IMR-90 (cell line): ENCODE measurements at regions of chr4 and their contacts with region 1.

Region 1: DNA sequence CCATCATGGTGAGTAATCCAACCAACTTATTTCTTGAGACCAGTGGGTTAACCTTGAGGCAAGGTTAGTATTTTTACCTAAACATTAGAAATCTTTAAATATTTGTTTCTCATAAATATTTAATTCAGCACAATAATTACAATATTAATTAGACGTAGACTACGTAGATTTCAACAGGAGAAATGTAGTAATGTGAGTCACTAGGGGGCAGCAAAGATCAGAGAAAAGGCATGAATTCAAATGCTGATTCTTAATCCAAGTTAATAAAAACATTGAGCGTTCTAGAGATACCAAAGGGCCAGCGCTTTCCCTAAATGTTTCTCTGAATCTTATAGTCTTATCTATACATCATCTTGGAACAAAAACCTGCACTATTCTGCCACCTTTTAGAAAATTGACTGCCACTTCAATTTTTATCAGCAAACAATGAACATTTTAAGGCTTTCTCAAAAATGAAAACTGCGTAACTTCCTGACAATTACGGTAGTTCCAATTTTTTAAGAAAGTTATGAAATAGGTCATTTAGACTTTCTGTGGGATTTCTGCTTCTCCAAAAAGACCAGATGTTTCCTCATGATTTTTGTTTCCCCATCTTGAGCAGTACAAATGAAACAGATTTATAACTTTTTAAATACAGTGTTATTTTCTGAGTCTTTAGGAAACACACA is 180.7 kb downstream of the GASK1B start:
- DNase-seq: peak; percentile 77
- ATAC-seq: peak; percentile 81
- H3K4me3 ChIP-seq: no peak overlapping the region
- H3K27ac ChIP-seq: no peak overlapping the region
- H3K4me1 ChIP-seq: peaks cover 6% of the 10 kb centered on the region
- H3K27me3 ChIP-seq: no peaks in the 10 kb centered on the region; the same call in 1 of the 2 replicates
- CTCF ChIP-seq: peak; percentile 87
- POLR2A ChIP-seq: no peak
- RAD21 ChIP-seq: peak; percentile 90

Region 2: GRCh38 chr4:157265281-157265680 is 726.9 kb before region 1 on chr4:
- CTCF ChIA-PET with region 1: no interaction called
- POLR2A ChIA-PET with region 1: no interaction called
- dilution Hi-C with region 1: no loop called
- in situ Hi-C with region 1: no loop called
- intact Hi-C with region 1: no loop called
- DNase-seq: no peak
- ATAC-seq: no peak
- H3K4me3 ChIP-seq: no peak overlapping the region
- H3K27ac ChIP-seq: no peak overlapping the region
- H3K4me1 ChIP-seq: no peaks in the 10 kb centered on the region
- H3K27me3 ChIP-seq: no peaks in the 10 kb centered on the region
- CTCF ChIP-seq: no peak
- POLR2A ChIP-seq: no peak
- RAD21 ChIP-seq: no peak

Region 3: GRCh38 chr4:158042591-158043030 is 50.4 kb after region 1 on chr4:
- CTCF ChIA-PET with region 1: no interaction called
- POLR2A ChIA-PET with region 1: no interaction called
- dilution Hi-C with region 1: no loop called
- in situ Hi-C with region 1: no loop called
- intact Hi-C with region 1: loop called (anchors 2 kb)
- DNase-seq: peak; percentile 54
- ATAC-seq: peak; percentile 89
- H3K4me3 ChIP-seq: no peak overlapping the region
- H3K27ac ChIP-seq: no peak overlapping the region
- H3K4me1 ChIP-seq: peaks cover 3% of the 10 kb centered on the region; the same call in 1 of the 2 replicates
- H3K27me3 ChIP-seq: no peaks in the 10 kb centered on the region
- CTCF ChIP-seq: no peak
- POLR2A ChIP-seq: no peak
- RAD21 ChIP-seq: no peak

Region 4: DNA sequence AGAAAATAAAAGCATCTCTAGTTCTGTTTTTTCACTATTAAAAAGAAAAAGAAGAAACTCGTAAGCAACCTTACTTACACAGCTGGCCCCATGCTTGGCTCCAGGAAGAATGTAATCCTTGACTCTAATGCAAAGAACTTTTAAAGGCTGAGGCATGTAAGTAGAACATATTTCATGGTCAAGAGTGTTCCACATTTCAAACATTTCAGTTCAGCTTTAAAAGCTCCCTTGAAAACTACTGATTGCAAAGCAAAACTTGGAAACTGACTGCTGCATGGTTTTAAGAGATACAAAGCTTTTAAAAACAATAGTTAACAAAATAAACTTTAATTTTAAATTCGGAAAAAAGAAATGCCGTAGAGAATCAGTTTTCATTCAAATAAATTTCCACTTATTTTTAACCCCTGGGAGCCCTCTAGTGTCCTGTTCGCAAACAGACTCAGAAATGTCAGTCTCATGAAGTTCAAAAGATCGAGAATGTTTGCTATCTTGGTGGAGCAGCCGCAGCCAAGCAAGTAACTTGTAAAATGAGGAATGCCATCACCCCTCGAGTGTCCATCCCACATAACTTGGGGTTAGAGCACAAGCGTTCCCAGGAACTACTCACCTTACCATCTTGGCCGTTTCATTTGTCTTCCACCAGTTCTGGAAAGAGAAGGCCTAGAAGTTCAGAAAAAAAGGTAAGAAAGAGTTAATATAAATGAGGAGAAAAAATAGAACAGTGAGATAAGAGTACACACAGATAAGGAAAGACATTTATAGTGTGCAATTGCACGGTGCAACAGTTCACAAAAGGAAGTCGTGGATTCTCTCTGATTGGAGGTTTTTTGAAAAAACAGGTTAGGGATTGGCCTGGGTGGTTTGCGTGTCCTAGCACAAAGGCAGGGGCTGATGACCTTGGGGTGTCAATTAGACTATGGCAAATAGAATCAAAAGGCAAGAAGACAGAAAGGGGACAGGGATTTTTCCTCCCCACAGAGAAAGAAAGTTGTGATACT is 180.4 kb after region 1 on chr4 and contains the start of gene GASK1B:
- CTCF ChIA-PET with region 1: interaction called, 9 read pairs
- POLR2A ChIA-PET with region 1: no interaction called
- dilution Hi-C with region 1: no loop called
- in situ Hi-C with region 1: loop called (anchors 5 kb)
- intact Hi-C with region 1: loop called (anchors 1 kb)
- DNase-seq: peak; percentile 64
- ATAC-seq: peak; percentile 81
- H3K4me3 ChIP-seq: peak within 1 kb of the TSS; percentile 30
- H3K27ac ChIP-seq: peak within 1 kb of the TSS; percentile 71; the same call in 1 of the 2 replicates
- H3K4me1 ChIP-seq: peaks cover 17% of the 10 kb centered on the region
- H3K27me3 ChIP-seq: no peaks in the 10 kb centered on the region
- CTCF ChIP-seq: peak; percentile 81
- POLR2A ChIP-seq: no peak
- RAD21 ChIP-seq: peak; percentile 83
- total RNA-seq, gene GASK1B: 4.1 and 6.7 TPM in 2 replicates